HepG2 (cell line): ENCODE measurements at regions of chr7 and their contacts with region 1.

Region 1: GRCh38 chr7:80918909-80919662 is at the start of gene SEMA3C:
- DNase-seq: peak; percentile 65
- ATAC-seq: peak; percentile 99
- H3K4me3 ChIP-seq: peak within 1 kb of the TSS; percentile 35 to 65 (median 47); a peak in 5 of 6 replicates
- H3K27ac ChIP-seq: no peak within 1 kb of the TSS
- H3K4me1 ChIP-seq: peaks cover 23% of the 10 kb centered on the region
- H3K27me3 ChIP-seq: peaks cover 0 to 10% of the 10 kb centered on the region in 2 experiments; a peak in 2 of 5 replicates
- CTCF ChIP-seq: peak; percentile 11; the same call in 1 of the 2 replicates
- EP300 ChIP-seq: no peak
- POLR2A ChIP-seq: no peak
- RAD21 ChIP-seq: 0 out of 2 replicates have a peak, but pooled peaks have one; percentile 16
- total RNA-seq, gene SEMA3C: 0.13 TPM in 1 of 2 replicates, not detected in the other

Region 2: GRCh38 chr7:80346704-80347103 is 572.4 kb before region 1 on chr7:
- CTCF ChIA-PET with region 1: no interaction called
- POLR2A ChIA-PET with region 1: no interaction called
- in situ Hi-C with region 1: no loop called
- intact Hi-C with region 1: no loop called
- DNase-seq: no peak
- ATAC-seq: no peak
- H3K4me3 ChIP-seq: no peak overlapping the region
- H3K27ac ChIP-seq: no peak overlapping the region
- H3K4me1 ChIP-seq: no peaks in the 10 kb centered on the region
- H3K27me3 ChIP-seq: no peaks in the 10 kb centered on the region
- CTCF ChIP-seq: no peak
- EP300 ChIP-seq: no peak
- POLR2A ChIP-seq: no peak
- RAD21 ChIP-seq: no peak

Region 3: DNA sequence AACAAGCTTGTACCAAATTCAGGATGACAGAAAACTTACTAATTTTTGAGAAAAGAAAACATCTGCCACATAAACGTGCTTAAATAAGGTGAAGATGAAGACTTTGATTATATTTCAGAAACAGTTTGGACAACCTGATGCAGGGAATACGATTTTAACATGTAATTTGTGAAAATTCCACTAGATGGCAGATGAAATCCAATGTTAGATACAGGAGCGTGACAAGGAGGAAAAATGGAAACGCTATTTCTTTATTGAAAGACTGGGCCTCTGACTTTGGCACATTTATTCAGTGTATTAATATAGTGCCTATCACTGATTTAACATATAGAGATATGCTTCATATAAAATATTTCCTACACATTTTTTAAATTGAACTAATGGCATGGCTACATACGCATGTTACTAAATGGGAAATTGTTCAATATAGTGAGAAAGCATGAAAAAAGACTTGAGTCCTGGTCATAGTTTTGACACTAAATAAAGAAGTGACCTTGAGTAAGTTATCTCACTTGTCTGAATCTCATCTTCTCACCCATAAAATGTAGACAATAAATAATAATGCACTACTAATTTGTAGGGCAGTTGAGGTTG is 219.9 kb before region 1 on chr7:
- CTCF ChIA-PET with region 1: no interaction called
- POLR2A ChIA-PET with region 1: no interaction called
- in situ Hi-C with region 1: no loop called
- intact Hi-C with region 1: loop called (anchors 1 kb)
- DNase-seq: peak; percentile 25
- ATAC-seq: peak; percentile 62
- H3K4me3 ChIP-seq: no peak overlapping the region
- H3K27ac ChIP-seq: no peak overlapping the region
- H3K4me1 ChIP-seq: no peaks in the 10 kb centered on the region
- H3K27me3 ChIP-seq: peaks cover 0 to 2% of the 10 kb centered on the region in 2 experiments; a peak in 1 of 5 replicates
- CTCF ChIP-seq: peak; percentile 74
- EP300 ChIP-seq: no peak
- POLR2A ChIP-seq: no peak
- RAD21 ChIP-seq: peak; percentile 55

Region 4: GRCh38 chr7:81140775-81141174 is 221.7 kb after region 1 on chr7:
- CTCF ChIA-PET with region 1: no interaction called
- POLR2A ChIA-PET with region 1: no interaction called
- in situ Hi-C with region 1: no loop called
- intact Hi-C with region 1: no loop called
- DNase-seq: no peak
- ATAC-seq: no peak
- H3K4me3 ChIP-seq: no peak overlapping the region
- H3K27ac ChIP-seq: no peak overlapping the region
- H3K4me1 ChIP-seq: peaks cover 18% of the 10 kb centered on the region
- H3K27me3 ChIP-seq: no peaks in the 10 kb centered on the region
- CTCF ChIP-seq: no peak
- EP300 ChIP-seq: no peak
- POLR2A ChIP-seq: no peak
- RAD21 ChIP-seq: no peak

Region 5: DNA sequence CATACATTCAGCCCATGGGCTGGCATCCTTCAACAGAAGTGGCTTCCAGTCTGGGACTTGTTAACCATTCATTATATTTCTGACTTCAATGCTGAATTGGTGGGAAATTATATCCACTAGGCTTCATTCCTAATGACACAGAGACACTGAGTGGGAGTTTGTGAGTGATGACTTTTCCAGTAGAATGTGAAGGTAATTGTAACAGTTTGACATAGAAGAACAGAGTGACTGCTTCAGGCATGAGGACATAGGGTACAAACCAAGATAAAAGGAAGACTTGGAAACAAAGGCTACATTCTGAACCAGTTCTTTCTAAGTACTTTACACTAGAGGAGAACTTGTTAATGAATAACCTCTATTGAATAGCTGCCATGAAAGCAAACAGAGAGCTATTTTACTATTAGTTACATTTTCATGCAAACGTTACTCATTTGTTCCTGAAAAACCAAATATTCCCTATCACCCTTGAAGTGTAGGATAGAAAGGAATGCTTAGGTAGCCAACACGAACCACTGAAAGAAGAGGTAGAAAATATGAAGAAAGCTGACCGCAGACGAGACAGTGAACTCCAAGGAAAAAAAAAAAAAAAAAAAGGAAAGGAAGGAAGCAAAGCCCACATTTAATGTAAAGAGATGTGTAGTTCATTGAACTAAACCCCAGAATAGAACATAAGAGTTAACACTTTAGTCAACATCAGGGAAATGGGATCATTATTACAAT is 236.7 kb after region 1 on chr7:
- CTCF ChIA-PET with region 1: no interaction called
- POLR2A ChIA-PET with region 1: no interaction called
- in situ Hi-C with region 1: no loop called
- intact Hi-C with region 1: loop called (anchors 1 kb)
- DNase-seq: peak; percentile 98
- ATAC-seq: peak; percentile 98
- H3K4me3 ChIP-seq: peak overlapping the region in 1 of 3 experiments; percentile 1; a peak in 1 of 6 replicates
- H3K27ac ChIP-seq: peak overlapping the region; percentile 81
- H3K4me1 ChIP-seq: peaks cover 71% of the 10 kb centered on the region
- H3K27me3 ChIP-seq: no peaks in the 10 kb centered on the region
- CTCF ChIP-seq: peak; percentile 50; the same call in 1 of the 2 replicates
- EP300 ChIP-seq: peak in 1 of 2 experiments; percentile 86; a peak in 2 of 4 replicates
- POLR2A ChIP-seq: no peak
- RAD21 ChIP-seq: no peak

Region 6: GRCh38 chr7:81256991-81257390 is 337.9 kb after region 1 on chr7:
- CTCF ChIA-PET with region 1: interaction called, 5 read pairs
- POLR2A ChIA-PET with region 1: no interaction called
- in situ Hi-C with region 1: loop called (anchors 10 kb)
- intact Hi-C with region 1: loop called (anchors 1 kb)
- DNase-seq: peak; percentile 3
- ATAC-seq: peak; percentile 58
- H3K4me3 ChIP-seq: no peak overlapping the region
- H3K27ac ChIP-seq: no peak overlapping the region
- H3K4me1 ChIP-seq: no peaks in the 10 kb centered on the region
- H3K27me3 ChIP-seq: no peaks in the 10 kb centered on the region
- CTCF ChIP-seq: peak; percentile 62
- EP300 ChIP-seq: no peak
- POLR2A ChIP-seq: no peak
- RAD21 ChIP-seq: peak; percentile 62

Region 7: GRCh38 chr7:81447351-81447952 is 528.4 kb after region 1 on chr7:
- CTCF ChIA-PET with region 1: no interaction called
- POLR2A ChIA-PET with region 1: no interaction called
- in situ Hi-C with region 1: loop called (anchors 25 kb)
- intact Hi-C with region 1: loop called (anchors 5 kb)
- DNase-seq: peak; percentile 27
- ATAC-seq: peak; percentile 89
- H3K4me3 ChIP-seq: no peak overlapping the region
- H3K27ac ChIP-seq: no peak overlapping the region
- H3K4me1 ChIP-seq: no peaks in the 10 kb centered on the region
- H3K27me3 ChIP-seq: no peaks in the 10 kb centered on the region
- CTCF ChIP-seq: peak; percentile 56
- EP300 ChIP-seq: no peak
- POLR2A ChIP-seq: no peak
- RAD21 ChIP-seq: no peak

Region 8: GRCh38 chr7:81469869-81470723 is 551.0 kb after region 1 on chr7:
- CTCF ChIA-PET with region 1: no interaction called
- POLR2A ChIA-PET with region 1: no interaction called
- in situ Hi-C with region 1: loop called (anchors 25 kb)
- intact Hi-C with region 1: loop called (anchors 10 kb)
- DNase-seq: peak; percentile 42
- ATAC-seq: peak; percentile 92
- H3K4me3 ChIP-seq: no peak overlapping the region
- H3K27ac ChIP-seq: no peak overlapping the region
- H3K4me1 ChIP-seq: peaks cover 7% of the 10 kb centered on the region; the same call in 1 of the 2 replicates
- H3K27me3 ChIP-seq: no peaks in the 10 kb centered on the region
- CTCF ChIP-seq: peak; percentile 84
- EP300 ChIP-seq: no peak
- POLR2A ChIP-seq: no peak
- RAD21 ChIP-seq: peak; percentile 41